Sigmoid colon (tissue), 7 donors: ENCODE measurements at regions of chr3 and their contacts with region 1.

Region 1: GRCh38 chr3:123406598-123406997 is 42.3 kb downstream of the ADCY5 start:
- DNase-seq: peak; percentile 98
- H3K4me3 ChIP-seq: no peak overlapping the region
- H3K27ac ChIP-seq: peak overlapping the region; percentile 87 to 93 (median 91)
- H3K4me1 ChIP-seq: peaks cover 0 to 91% (median 85%) of the 10 kb centered on the region in 4 donors
- H3K27me3 ChIP-seq: no peaks in the 10 kb centered on the region
- CTCF ChIP-seq: no peak
- EP300 ChIP-seq: no peak
- POLR2A ChIP-seq: no peak

Region 2: GRCh38 chr3:123373474-123373987 is 33.1 kb before region 1 on chr3:
- intact Hi-C with region 1: loop called (anchors 5 kb)
- DNase-seq: peak; percentile 94
- H3K4me3 ChIP-seq: no peak overlapping the region
- H3K27ac ChIP-seq: peak overlapping the region; percentile 68 to 91 (median 82)
- H3K4me1 ChIP-seq: peaks cover 0 to 92% (median 84%) of the 10 kb centered on the region in 4 donors
- H3K27me3 ChIP-seq: no peaks in the 10 kb centered on the region
- CTCF ChIP-seq: no peak
- EP300 ChIP-seq: peak in 3 of 4 donors; percentile 50 to 55 (median 54)
- POLR2A ChIP-seq: no peak

Region 3: DNA sequence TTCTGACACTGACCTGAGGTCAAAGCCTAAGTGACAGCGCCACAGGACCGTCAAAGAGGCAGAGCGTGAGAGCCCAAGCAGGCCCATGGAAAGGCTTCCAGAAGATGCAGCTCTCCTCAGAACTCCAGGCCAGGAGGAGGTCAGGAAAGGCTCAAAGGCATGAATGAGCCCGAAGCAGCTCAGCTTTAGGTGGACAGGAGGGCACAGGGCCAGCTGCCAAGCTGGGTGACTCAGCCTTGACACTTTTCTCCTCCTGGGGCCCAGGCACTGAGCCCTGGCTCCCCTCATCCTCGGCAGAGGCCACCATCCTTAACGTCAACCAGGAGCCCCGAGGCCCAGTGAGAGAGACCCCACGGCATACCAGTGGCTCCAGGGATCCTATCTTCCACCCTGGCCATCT is 20.6 kb before region 1 on chr3:
- intact Hi-C with region 1: loop called (anchors 2 kb)
- DNase-seq: peak; percentile 85
- H3K4me3 ChIP-seq: no peak overlapping the region
- H3K27ac ChIP-seq: peak overlapping the region; percentile 87 to 93 (median 91)
- H3K4me1 ChIP-seq: peaks cover 0 to 100% (median 99%) of the 10 kb centered on the region in 4 donors
- H3K27me3 ChIP-seq: no peaks in the 10 kb centered on the region
- CTCF ChIP-seq: no peak
- EP300 ChIP-seq: no peak
- POLR2A ChIP-seq: no peak